ENCODE measurements at regions of chr1 and their contacts with region 1.

Region 1: GRCh38 chr1:160795951-160796383 is at the start of gene LY9:
- DNase-seq: peak; percentile 89
- H3K4me3 Mint-ChIP-seq: peak within 1 kb of the TSS; percentile 96
- H3K27ac Mint-ChIP-seq: peak within 1 kb of the TSS; percentile 99
- H3K4me1 Mint-ChIP-seq: peaks cover 63% of the 10 kb centered on the region
- H3K27me3 Mint-ChIP-seq: no peaks in the 10 kb centered on the region

Region 2: DNA sequence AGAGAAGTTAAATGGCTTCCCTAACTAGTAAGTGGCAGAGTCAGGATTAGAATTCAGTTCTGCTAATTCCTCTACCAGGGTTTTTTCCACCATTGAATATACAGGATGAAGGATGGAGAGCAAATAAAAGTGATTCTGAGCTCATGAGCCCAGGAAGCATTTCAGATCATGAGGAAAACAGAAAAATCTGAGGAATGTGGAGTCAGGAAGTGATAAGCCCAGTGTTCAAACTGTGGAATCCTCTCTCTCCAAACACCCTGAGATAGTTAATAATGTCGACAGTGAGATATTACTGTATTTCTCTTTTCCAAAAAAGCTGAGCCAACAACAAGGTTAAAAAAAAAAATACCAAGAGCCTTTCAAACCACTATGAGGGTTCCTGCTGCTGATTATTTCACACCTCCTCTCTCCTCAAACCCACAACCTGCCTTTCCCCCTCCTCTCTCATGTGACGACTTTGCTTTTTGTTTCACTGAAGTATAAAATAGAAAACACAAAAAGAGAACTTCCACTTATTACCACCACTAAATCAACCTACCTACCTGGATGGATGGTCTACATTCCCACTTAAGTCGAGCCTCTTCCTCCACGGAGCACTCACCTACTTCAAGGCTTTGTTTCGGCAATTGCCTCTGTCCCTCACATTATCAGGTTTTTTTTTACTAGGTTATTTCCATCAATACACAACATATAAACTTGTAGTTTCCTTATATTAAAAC is 158.0 kb before region 1 on chr1:
- CTCF ChIA-PET with region 1: no interaction called
- DNase-seq: peak; percentile 70
- H3K4me3 Mint-ChIP-seq: peak overlapping the region; percentile 68
- H3K27ac Mint-ChIP-seq: peak overlapping the region; percentile 94
- H3K4me1 Mint-ChIP-seq: peaks cover 96% of the 10 kb centered on the region
- H3K27me3 Mint-ChIP-seq: no peaks in the 10 kb centered on the region

Region 3: GRCh38 chr1:160830321-160831153 is 34.6 kb after region 1 on chr1:
- CTCF ChIA-PET with region 1: interaction called, 48 read pairs
- DNase-seq: peak; percentile 88
- H3K4me3 Mint-ChIP-seq: no peak overlapping the region
- H3K27ac Mint-ChIP-seq: no peak overlapping the region
- H3K4me1 Mint-ChIP-seq: peaks cover 26% of the 10 kb centered on the region
- H3K27me3 Mint-ChIP-seq: no peaks in the 10 kb centered on the region

Region 4: GRCh38 chr1:160855181-160855981 is 59.4 kb after region 1 on chr1:
- CTCF ChIA-PET with region 1: no interaction called
- DNase-seq: no peak
- H3K4me3 Mint-ChIP-seq: no peak overlapping the region
- H3K27ac Mint-ChIP-seq: no peak overlapping the region
- H3K4me1 Mint-ChIP-seq: no peaks in the 10 kb centered on the region
- H3K27me3 Mint-ChIP-seq: peaks cover 4% of the 10 kb centered on the region

Measured in activated naive CD4-positive, alpha-beta T cell treated with anti-CD3 and anti-CD28 coated beads, Interleukin-2, amount 10 ng/mL, durations not matched to agents 7 days and 5 days (primary cell).